GM12878 (cell line): ENCODE measurements at regions of chr5 and their contacts with region 1.

Region 1: GRCh38 chr5:55994574-55995333 is at the start of gene IL6ST:
- DNase-seq: peak; percentile 78
- ATAC-seq: peak; percentile 91
- H3K4me3 ChIP-seq: peak within 1 kb of the TSS; percentile 93
- H3K27ac ChIP-seq: peak within 1 kb of the TSS; percentile 93
- H3K4me1 ChIP-seq: no peaks in the 10 kb centered on the region; the same call in none of the 2 replicates
- H3K27me3 ChIP-seq: no peaks in the 10 kb centered on the region
- CTCF ChIP-seq: peak in 1 of 3 experiments; percentile 19; a peak in 1 of 6 replicates
- EP300 ChIP-seq: no peak
- POLR2A ChIP-seq: peak; percentile 88
- RAD21 ChIP-seq: no peak
- polyA plus RNA-seq, gene IL6ST: 1.5 to 1.8 TPM

Region 2: DNA sequence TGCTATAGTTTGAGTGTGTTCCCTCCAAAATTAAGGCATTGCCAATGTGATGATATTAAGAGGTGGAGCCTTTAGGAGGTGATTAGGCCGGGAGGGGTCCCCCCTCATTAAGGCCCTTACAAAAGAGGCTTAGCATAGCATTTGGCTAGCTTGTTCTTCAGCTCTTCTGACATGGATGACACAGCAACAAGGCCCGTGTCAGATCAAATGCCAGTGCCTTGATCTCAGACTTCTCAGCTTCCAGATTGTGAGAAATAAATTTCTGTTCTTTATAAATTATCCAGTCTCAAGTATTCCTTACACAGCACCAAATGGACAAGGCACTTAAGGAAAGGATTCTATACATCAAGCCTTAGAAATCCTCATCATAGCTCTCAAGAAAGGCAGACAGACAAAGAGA is 314.4 kb before region 1 on chr5:
- CTCF ChIA-PET with region 1: no interaction called
- POLR2A ChIA-PET with region 1: no interaction called
- RAD21 ChIA-PET with region 1: no interaction called
- SMC1A ChIA-PET with region 1: no interaction called
- in situ Hi-C with region 1: no loop called
- intact Hi-C with region 1: no loop called
- DNase-seq: no peak
- ATAC-seq: no peak
- H3K4me3 ChIP-seq: no peak overlapping the region
- H3K27ac ChIP-seq: no peak overlapping the region
- H3K4me1 ChIP-seq: no peaks in the 10 kb centered on the region
- H3K27me3 ChIP-seq: no peaks in the 10 kb centered on the region
- CTCF ChIP-seq: no peak
- EP300 ChIP-seq: no peak
- POLR2A ChIP-seq: no peak
- RAD21 ChIP-seq: no peak

Region 3: DNA sequence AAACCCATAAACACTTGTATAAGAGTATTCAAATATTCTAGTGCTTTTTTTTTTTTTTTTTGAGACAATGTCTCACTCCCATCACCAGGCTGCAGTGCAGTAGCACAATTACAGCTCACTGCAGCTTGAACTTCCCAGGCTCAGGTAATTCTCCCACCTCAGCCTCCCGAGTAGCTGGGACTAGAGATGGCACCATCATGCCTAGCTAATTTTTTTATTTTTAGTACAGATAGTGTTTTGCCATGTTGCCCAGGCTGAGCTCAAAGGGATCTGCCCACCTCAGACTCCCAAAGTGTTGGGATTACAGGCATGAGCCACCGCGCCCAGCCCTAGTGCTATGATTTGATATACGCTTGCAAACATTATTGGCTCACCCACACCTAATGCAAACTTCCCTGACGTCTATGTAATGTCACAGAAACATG is 11.8 kb before region 1 on chr5:
- CTCF ChIA-PET with region 1: interaction called, 6 read pairs
- POLR2A ChIA-PET with region 1: interaction called, 12 read pairs
- RAD21 ChIA-PET with region 1: interaction called, 25 read pairs
- SMC1A ChIA-PET with region 1: interaction called, 89 read pairs
- in situ Hi-C with region 1: no loop called
- intact Hi-C with region 1: no loop called
- DNase-seq: no peak
- ATAC-seq: peak; percentile 28
- H3K4me3 ChIP-seq: no peak overlapping the region
- H3K27ac ChIP-seq: no peak overlapping the region
- H3K4me1 ChIP-seq: peaks cover 1% of the 10 kb centered on the region
- H3K27me3 ChIP-seq: no peaks in the 10 kb centered on the region
- CTCF ChIP-seq: peak in 2 of 3 experiments; percentile 14 to 50; a peak in 3 of 6 replicates
- EP300 ChIP-seq: no peak
- POLR2A ChIP-seq: no peak
- RAD21 ChIP-seq: peak; percentile 38

Region 4: GRCh38 chr5:56056875-56057274 is 62.1 kb after region 1 on chr5:
- CTCF ChIA-PET with region 1: interaction called, 5 read pairs
- POLR2A ChIA-PET with region 1: interaction called, 26 read pairs
- RAD21 ChIA-PET with region 1: interaction called, 77 read pairs
- SMC1A ChIA-PET with region 1: interaction called, 42 read pairs
- in situ Hi-C with region 1: loop called (anchors 5 kb)
- intact Hi-C with region 1: loop called (anchors 1 kb)
- DNase-seq: peak; percentile 85
- ATAC-seq: peak; percentile 78
- H3K4me3 ChIP-seq: 0 out of 2 replicates have a peak overlapping the region, but pooled peaks have one; percentile 8
- H3K27ac ChIP-seq: peak overlapping the region; percentile 47; the same call in 1 of the 2 replicates
- H3K4me1 ChIP-seq: peaks cover 41% of the 10 kb centered on the region
- H3K27me3 ChIP-seq: no peaks in the 10 kb centered on the region
- CTCF ChIP-seq: no peak
- EP300 ChIP-seq: peak in 1 of 2 experiments; percentile 48; a peak in 1 of 4 replicates
- POLR2A ChIP-seq: no peak
- RAD21 ChIP-seq: no peak

Region 5: DNA sequence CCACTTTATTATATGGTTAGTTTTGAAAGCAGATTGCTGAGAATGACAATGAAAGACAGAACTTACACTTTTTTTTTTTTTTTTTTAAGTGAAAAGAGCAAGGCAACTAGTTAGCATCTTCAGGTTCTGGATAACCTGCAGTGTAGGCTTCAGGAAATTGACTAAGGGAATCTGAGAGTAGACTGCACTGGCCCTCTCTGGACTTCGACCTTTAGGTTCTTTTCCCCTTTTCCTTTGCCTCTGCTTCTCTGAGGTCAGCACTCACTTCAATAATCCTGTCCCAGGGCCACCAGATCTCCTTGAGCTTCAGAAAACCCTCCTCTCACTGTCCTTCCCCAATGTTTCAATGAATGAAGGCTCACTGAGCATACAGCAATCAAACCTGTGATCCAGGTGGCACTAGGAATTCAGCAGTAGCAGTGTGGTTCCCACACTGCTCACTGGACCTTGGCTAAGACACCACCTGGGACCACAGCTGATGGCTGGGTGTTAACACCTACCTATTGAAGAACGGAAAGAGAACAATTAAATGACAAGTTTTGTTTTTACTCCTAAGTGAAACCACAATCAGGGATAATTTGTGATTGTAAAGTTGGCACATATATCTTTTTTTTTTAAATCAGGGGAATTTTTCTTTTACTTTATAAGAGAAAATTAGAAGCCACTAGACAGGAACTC is 85.8 kb after region 1 on chr5:
- CTCF ChIA-PET with region 1: interaction called, 3 read pairs
- POLR2A ChIA-PET with region 1: interaction called, 13 read pairs
- RAD21 ChIA-PET with region 1: interaction called, 23 read pairs
- SMC1A ChIA-PET with region 1: interaction called, 9 read pairs
- in situ Hi-C with region 1: no loop called
- intact Hi-C with region 1: loop called (anchors 1 kb)
- DNase-seq: peak; percentile 98
- ATAC-seq: peak; percentile 82
- H3K4me3 ChIP-seq: no peak overlapping the region
- H3K27ac ChIP-seq: peak overlapping the region; percentile 84
- H3K4me1 ChIP-seq: peaks cover 21% of the 10 kb centered on the region
- H3K27me3 ChIP-seq: no peaks in the 10 kb centered on the region
- CTCF ChIP-seq: no peak
- EP300 ChIP-seq: peak; percentile 83 to 87
- POLR2A ChIP-seq: no peak
- RAD21 ChIP-seq: no peak

Region 6: GRCh38 chr5:56095579-56096102 is 100.9 kb after region 1 on chr5:
- CTCF ChIA-PET with region 1: interaction called, 3 read pairs
- POLR2A ChIA-PET with region 1: interaction called, 11 read pairs
- RAD21 ChIA-PET with region 1: interaction called, 20 read pairs
- SMC1A ChIA-PET with region 1: interaction called, 25 read pairs
- in situ Hi-C with region 1: no loop called
- intact Hi-C with region 1: loop called (anchors 1 kb)
- DNase-seq: peak; percentile 96
- ATAC-seq: peak; percentile 87
- H3K4me3 ChIP-seq: no peak overlapping the region
- H3K27ac ChIP-seq: peak overlapping the region; percentile 76
- H3K4me1 ChIP-seq: peaks cover 21% of the 10 kb centered on the region
- H3K27me3 ChIP-seq: no peaks in the 10 kb centered on the region
- CTCF ChIP-seq: no peak
- EP300 ChIP-seq: peak; percentile 79 to 90
- POLR2A ChIP-seq: no peak
- RAD21 ChIP-seq: no peak